ENCODE measurements at regions of chr9 and their contacts with region 1.

Region 1: DNA sequence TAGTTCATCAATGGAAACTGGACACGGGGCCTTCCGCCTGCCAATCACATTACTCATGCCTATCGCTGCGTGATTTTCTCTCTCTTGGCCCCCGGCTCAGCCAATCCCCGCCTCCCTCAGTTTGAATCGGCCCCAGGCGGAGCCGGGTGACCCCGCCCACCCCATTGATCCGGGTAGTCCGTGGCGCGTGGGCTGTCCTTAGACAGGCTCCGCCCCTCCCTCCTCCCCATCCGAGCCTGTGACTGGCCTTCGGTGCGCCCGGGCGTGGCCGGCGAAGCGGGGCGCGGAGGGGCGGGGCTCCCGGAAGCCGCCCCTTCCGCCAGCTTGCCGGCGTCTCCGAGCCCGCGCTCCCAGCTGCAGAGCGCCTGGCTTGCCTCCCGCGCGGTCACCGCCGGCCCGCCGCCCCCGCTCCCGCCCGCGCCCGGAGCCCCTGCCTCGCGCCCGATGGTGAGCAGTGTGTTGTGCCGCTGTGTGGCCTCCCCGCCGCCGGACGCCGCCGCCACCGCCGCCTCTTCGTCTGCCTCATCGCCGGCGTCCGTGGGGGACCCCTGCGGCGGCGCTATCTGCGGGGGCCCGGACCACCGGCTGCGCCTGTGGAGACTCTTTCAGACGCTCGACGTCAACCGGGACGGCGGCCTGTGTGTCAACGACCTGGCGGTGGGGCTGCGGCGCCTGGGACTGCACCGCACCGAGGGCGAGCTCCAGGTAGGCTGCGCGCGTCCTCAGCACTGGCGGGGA is at the start of gene SLC25A25:
- DNase-seq: peak; percentile 100
- H3K4me3 Mint-ChIP-seq: peak within 1 kb of the TSS; percentile 92
- H3K27ac Mint-ChIP-seq: peak within 1 kb of the TSS; percentile 83
- H3K4me1 Mint-ChIP-seq: peaks cover 53% of the 10 kb centered on the region
- H3K27me3 Mint-ChIP-seq: no peaks in the 10 kb centered on the region
- total RNA-seq, gene SLC25A25: 13.4 and 13.5 TPM in 2 replicates

Region 2: GRCh38 chr9:127734747-127735529 is 333.1 kb before region 1 on chr9 and contains the start of gene TOR2A:
- intact Hi-C with region 1: loop called (anchors 1 kb)
- DNase-seq: peak; percentile 98
- H3K4me3 Mint-ChIP-seq: peak within 1 kb of the TSS; percentile 89
- H3K27ac Mint-ChIP-seq: peak within 1 kb of the TSS; percentile 96
- H3K4me1 Mint-ChIP-seq: peaks cover 15% of the 10 kb centered on the region
- H3K27me3 Mint-ChIP-seq: no peaks in the 10 kb centered on the region
- total RNA-seq, gene TOR2A: 16.6 and 18.9 TPM in 2 replicates

Region 3: DNA sequence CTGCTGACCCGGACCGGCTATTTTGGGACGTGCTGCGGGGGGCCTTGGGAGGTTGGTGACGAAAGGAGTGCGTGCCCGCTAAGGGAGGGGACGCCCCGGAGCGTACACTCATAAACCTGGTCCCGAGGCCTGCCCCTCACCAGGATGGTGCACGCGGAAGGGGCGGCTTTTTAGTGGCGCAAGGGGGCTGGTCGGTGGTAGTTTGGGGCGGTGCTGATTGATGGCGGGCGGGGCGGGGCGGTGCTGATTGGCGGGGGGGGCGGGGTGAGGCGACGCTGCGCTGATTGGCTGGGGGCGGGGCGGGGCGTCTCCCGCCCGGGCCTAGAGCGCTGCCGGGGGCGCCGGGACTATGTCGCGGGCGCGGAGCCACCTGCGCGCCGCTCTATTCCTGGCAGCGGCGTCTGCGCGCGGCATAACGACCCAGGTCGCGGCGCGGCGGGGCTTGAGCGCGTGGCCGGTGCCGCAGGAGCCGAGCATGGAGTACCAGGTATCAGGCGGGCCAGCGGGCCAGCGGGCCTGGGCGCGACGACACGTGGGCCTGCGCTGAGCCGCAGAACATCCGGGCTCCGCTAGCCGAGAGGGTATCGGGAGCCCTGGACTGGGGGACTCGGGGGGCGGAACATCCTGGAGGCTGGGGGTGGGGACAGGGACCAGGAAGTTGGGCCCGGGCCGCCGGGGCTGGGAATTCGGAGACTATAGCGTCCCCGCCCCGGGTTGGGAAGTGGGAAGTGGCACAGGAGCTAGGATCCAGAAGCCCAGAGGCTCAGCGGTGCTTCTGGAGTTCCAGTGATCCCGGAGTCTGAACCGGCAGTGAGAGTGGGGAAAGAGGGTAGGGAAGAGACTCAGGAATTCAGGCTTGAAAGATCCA is 265.2 kb before region 1 on chr9 and contains the start of gene FPGS:
- intact Hi-C with region 1: no loop called
- DNase-seq: peak; percentile 74
- H3K4me3 Mint-ChIP-seq: peak within 1 kb of the TSS; percentile 97
- H3K27ac Mint-ChIP-seq: peak within 1 kb of the TSS; percentile 93
- H3K4me1 Mint-ChIP-seq: peaks cover 17% of the 10 kb centered on the region
- H3K27me3 Mint-ChIP-seq: no peaks in the 10 kb centered on the region
- total RNA-seq, gene FPGS: 128 and 130 TPM in 2 replicates

Region 4: GRCh38 chr9:127937388-127938280 is 130.4 kb before region 1 on chr9 and contains the start of gene DPM2:
- intact Hi-C with region 1: loop called (anchors 1 kb)
- DNase-seq: peak; percentile 82
- H3K4me3 Mint-ChIP-seq: peak within 1 kb of the TSS; percentile 92
- H3K27ac Mint-ChIP-seq: peak within 1 kb of the TSS; percentile 91
- H3K4me1 Mint-ChIP-seq: peaks cover 37% of the 10 kb centered on the region
- H3K27me3 Mint-ChIP-seq: peaks cover 2% of the 10 kb centered on the region
- total RNA-seq, gene DPM2: 62.6 and 70.2 TPM in 2 replicates

Region 5: GRCh38 chr9:128026773-128027541 is 41.1 kb before region 1 on chr9:
- intact Hi-C with region 1: loop called (anchors 2 kb)
- DNase-seq: peak; percentile 37
- H3K4me3 Mint-ChIP-seq: peak overlapping the region; percentile 60
- H3K27ac Mint-ChIP-seq: peak overlapping the region; percentile 93
- H3K4me1 Mint-ChIP-seq: peaks cover 81% of the 10 kb centered on the region
- H3K27me3 Mint-ChIP-seq: peaks cover 4% of the 10 kb centered on the region

Region 6: GRCh38 chr9:128127990-128128835 is 60.2 kb after region 1 on chr9:
- intact Hi-C with region 1: loop called (anchors 1 kb)
- DNase-seq: peak; percentile 79
- H3K4me3 Mint-ChIP-seq: peak overlapping the region; percentile 90
- H3K27ac Mint-ChIP-seq: peak overlapping the region; percentile 99
- H3K4me1 Mint-ChIP-seq: peaks cover 39% of the 10 kb centered on the region
- H3K27me3 Mint-ChIP-seq: peaks cover 19% of the 10 kb centered on the region

Region 7: GRCh38 chr9:128231638-128232527 is 163.8 kb after region 1 on chr9:
- intact Hi-C with region 1: no loop called
- DNase-seq: no peak
- H3K4me3 Mint-ChIP-seq: no peak overlapping the region
- H3K27ac Mint-ChIP-seq: no peak overlapping the region
- H3K4me1 Mint-ChIP-seq: no peaks in the 10 kb centered on the region
- H3K27me3 Mint-ChIP-seq: peaks cover 3% of the 10 kb centered on the region

Region 8: GRCh38 chr9:128249908-128250838 is 182.1 kb after region 1 on chr9:
- intact Hi-C with region 1: loop called (anchors 1 kb)
- DNase-seq: peak; percentile 94
- H3K4me3 Mint-ChIP-seq: peak overlapping the region; percentile 78
- H3K27ac Mint-ChIP-seq: no peak overlapping the region
- H3K4me1 Mint-ChIP-seq: peaks cover 5% of the 10 kb centered on the region
- H3K27me3 Mint-ChIP-seq: peaks cover 28% of the 10 kb centered on the region

Measured in activated T-helper 1 cell treated with anti-CD3 and anti-CD28 coated beads, Interleukin-12 subunit alpha, Interleukin-12 subunit beta, Interleukin-2, Interleukin-4 antibody, amounts not matched to agents 30 ng/mL and 10 ng/mL and 1 ng/mL, durations not matched to agents 14 hours and 24 hours and 36 hours (primary cell).